A549 (cell line): ENCODE measurements at regions of chr10 and their contacts with region 1.

Region 1: DNA sequence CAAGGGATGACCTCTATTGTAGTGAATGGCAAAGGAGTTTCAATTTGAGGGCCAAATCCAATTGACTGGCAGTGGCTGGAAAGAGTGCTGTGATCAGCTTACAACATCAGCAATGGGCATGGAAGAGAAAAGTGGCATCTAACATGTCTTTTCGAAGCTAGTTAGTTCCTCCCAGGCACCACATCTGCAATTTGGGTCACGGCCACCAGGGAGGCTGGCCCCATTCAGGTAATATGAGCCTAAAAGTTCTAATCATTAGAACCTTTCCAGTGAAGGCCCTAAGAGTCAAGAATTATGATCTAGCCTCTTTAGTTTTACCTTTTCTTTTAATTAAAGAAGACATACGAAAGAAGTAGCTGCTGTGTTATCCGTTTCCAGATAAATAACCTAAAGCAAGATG is 17.3 kb downstream of the CRTAC1 start:
- DNase-seq: no peak
- ATAC-seq: no peak
- H3K4me3 ChIP-seq: no peak overlapping the region
- H3K27ac ChIP-seq: no peak overlapping the region
- H3K4me1 ChIP-seq: no peaks in the 10 kb centered on the region
- CTCF ChIP-seq: no peak
- EP300 ChIP-seq: no peak
- POLR2A ChIP-seq: no peak
- RAD21 ChIP-seq: no peak

Region 2: GRCh38 chr10:98028168-98028770 is 15.1 kb after region 1 on chr10:
- CTCF ChIA-PET with region 1: interaction called, 42 read pairs
- POLR2A ChIA-PET with region 1: no interaction called
- DNase-seq: peak; percentile 72 to 73
- ATAC-seq: peak; percentile 20 to 72; a peak in 3 of 6 replicates
- H3K4me3 ChIP-seq: no peak overlapping the region
- H3K27ac ChIP-seq: no peak overlapping the region
- H3K4me1 ChIP-seq: peaks cover 15% of the 10 kb centered on the region; the same call in 1 of the 3 replicates
- CTCF ChIP-seq: peak; percentile 64
- EP300 ChIP-seq: no peak
- POLR2A ChIP-seq: no peak
- RAD21 ChIP-seq: peak; percentile 19 to 61; a peak in 2 of 5 replicates

Region 3: GRCh38 chr10:98107644-98108430 is 94.7 kb after region 1 on chr10:
- CTCF ChIA-PET with region 1: no interaction called
- POLR2A ChIA-PET with region 1: no interaction called
- DNase-seq: no peak
- ATAC-seq: no peak
- H3K4me3 ChIP-seq: no peak overlapping the region
- H3K27ac ChIP-seq: no peak overlapping the region
- H3K4me1 ChIP-seq: no peaks in the 10 kb centered on the region
- CTCF ChIP-seq: no peak
- EP300 ChIP-seq: no peak
- POLR2A ChIP-seq: no peak
- RAD21 ChIP-seq: no peak